ENCODE measurements at regions of chr10 and their contacts with region 1.

Region 1: DNA sequence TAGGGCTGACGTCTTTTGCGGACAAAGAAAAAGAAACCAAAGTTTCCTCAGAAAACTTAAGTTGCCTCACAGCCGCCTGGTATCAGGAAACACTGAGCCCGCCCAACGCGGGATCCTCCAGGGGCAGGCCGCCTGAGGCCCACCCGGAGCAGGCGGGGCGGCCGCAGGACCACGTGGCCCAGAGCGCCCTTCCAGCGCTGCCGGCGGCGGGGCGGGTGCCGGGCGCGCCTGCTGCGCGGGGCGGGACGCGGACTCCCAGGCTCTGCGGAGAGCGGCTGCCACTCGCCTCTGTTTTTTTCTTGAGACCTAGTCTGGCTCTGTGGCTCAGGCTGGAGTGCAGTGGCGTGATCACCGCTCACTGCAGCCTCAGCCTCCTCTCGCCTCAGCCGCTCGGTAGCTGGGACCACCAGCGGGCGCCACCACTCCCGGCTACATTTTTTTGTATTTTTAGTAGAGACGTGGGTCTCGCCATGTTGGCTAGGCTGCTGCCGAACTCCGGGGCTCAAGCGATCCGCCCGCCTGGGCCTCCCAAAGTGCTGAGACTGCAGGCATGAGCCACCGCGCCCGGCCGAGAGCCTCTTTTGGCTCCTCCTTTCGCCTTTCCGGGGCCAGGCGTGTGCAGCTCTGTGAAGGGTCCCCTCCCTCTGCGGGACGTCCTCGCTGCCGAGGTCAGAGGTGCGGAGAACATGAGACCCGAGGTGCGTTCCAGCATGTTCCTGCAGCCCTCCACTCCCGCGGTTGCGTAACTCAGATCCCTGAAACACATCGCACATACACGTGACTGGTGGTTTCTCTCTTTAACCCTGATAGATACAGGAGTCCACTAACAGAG is 11.6 kb upstream of the HNRNPF start:
- DNase-seq: peak; percentile 86
- H3K4me3 ChIP-seq: peak overlapping the region; percentile 65
- H3K27ac ChIP-seq: peak overlapping the region; percentile 88
- H3K4me1 ChIP-seq: peaks cover 53% of the 10 kb centered on the region
- CTCF ChIP-seq: peak; percentile 63

Region 2: GRCh38 chr10:43396928-43397624 is 23.5 kb before region 1 on chr10:
- CTCF ChIA-PET with region 1: no interaction called
- POLR2A ChIA-PET with region 1: interaction called, 7 read pairs
- intact Hi-C with region 1: loop called (anchors 1 kb)
- DNase-seq: peak; percentile 94
- H3K4me3 ChIP-seq: peak overlapping the region; percentile 92
- H3K27ac ChIP-seq: peak overlapping the region; percentile 82
- H3K4me1 ChIP-seq: peaks cover 63% of the 10 kb centered on the region
- CTCF ChIP-seq: no peak

Region 3: DNA sequence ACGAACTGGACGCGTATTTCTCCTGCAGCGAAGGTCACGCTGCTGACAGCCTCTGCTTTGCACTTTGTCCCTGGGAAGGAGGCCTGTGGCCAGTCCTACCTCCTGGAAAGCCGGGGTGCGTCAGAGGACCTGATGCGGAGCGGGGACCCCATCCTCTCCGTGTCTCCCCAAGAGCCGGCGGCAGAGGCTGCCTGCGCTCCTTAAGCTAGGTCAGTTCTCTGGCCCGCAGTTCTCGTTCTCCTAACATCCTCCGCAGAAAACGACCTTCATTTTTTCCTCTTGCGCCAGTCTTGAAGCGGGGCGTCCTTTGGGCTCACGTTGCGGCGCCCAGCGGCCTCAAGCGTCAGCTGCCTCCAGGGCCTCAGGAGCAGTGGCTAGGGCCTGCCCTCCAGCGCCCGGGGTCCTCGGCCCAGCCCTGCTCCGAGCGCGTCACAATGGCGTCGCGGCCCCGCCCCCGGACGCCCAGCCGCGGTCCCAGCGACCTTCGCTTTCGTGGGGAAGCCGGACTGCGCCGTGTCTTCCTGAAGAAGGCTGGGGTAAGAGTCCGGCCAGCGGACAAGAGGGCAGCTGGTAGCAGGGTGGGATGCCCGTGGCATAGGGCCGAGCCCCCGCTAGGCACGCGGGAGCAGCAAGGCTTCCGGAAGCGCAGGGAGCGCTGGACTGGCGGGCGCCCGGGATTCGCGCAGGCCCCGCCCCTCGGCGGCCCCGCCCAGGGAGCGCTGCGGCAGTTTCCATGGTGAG is 16.0 kb after region 1 on chr10 and contains the start of gene ZNF487:
- CTCF ChIA-PET with region 1: no interaction called
- POLR2A ChIA-PET with region 1: interaction called, 9 read pairs
- intact Hi-C with region 1: loop called (anchors 1 kb)
- DNase-seq: peak; percentile 89
- H3K4me3 ChIP-seq: peak within 1 kb of the TSS; percentile 81
- H3K27ac ChIP-seq: peak within 1 kb of the TSS; percentile 33
- H3K4me1 ChIP-seq: peaks cover 33% of the 10 kb centered on the region
- CTCF ChIP-seq: 0 out of 2 replicates have a peak, but pooled peaks have one; percentile 28
- total RNA-seq, gene ZNF487: 6.5 and 8.1 TPM in 2 replicates

Region 4: DNA sequence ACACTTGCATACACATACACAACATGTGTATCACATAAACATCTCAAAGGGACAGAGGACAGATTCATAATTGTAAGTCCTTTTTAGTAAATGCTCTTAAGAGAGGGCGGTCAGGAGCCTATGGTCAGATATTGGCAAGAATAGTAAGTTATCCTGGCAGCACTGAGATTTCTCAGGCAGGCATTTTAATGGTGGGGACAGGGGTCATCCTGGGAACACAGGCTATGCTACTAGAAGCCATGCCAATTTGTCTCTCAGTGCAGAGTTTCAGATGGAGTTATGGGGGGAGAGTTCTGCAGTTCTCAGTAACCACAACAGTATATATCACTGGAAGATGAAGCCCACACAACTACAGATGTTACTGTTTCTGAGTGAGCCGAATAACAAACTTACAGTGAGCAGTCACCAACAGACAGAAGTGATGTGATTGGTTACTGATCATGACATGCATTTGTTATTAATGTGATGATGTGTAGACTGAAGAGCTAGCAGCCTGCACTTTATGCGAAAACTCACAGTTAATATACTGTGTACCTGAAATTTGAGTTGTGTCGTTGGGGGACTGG is 32.8 kb after region 1 on chr10:
- CTCF ChIA-PET with region 1: no interaction called
- POLR2A ChIA-PET with region 1: interaction called, 5 read pairs
- intact Hi-C with region 1: loop called (anchors 1 kb)
- DNase-seq: peak; percentile 60
- H3K4me3 ChIP-seq: peak overlapping the region; percentile 61
- H3K27ac ChIP-seq: peak overlapping the region; percentile 100
- H3K4me1 ChIP-seq: peaks cover 55% of the 10 kb centered on the region
- CTCF ChIP-seq: no peak

Region 5: DNA sequence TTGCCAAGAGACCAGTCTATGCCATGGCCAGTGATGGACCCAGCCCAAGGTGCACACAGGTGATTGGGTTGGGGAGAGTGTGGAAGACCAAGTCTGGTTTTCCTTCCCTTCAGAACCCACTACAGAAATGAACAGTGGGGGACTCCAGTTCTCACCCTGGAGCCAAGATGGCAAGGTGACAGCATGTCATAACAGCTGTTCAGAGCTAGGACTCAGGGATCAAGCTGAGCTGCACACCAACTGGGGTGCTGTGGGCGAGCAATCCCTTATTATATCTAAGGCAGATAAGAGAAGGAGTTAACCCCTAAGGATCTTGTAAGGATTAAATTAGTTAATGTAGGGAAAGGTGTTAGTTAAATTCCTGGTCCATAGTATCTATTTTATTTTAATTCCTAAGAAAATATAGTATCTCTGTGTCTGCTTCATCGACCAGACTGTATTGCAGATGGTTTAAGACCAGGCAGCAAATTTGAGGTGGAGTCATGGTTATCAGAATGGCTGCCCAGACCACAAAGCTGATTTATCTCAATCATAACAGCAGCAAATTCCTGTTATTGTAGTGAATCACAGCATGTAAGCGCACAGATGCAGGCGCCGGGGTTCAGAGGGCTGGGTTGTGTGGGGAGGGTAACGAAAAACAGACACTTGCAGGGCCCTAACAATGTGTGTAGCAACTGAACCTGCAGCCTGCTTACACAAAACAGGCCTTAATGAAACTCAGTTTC is 436.8 kb after region 1 on chr10:
- CTCF ChIA-PET with region 1: no interaction called
- POLR2A ChIA-PET with region 1: no interaction called
- intact Hi-C with region 1: no loop called
- DNase-seq: no peak
- H3K4me3 ChIP-seq: no peak overlapping the region
- H3K27ac ChIP-seq: no peak overlapping the region
- H3K4me1 ChIP-seq: peaks cover 7% of the 10 kb centered on the region
- CTCF ChIP-seq: no peak